Activated naive CD4-positive, alpha-beta T cell treated with anti-CD3 and anti-CD28 coated beads for 36 hours (primary cell): ENCODE measurements at regions of chr1 and their contacts with region 1.

Region 1: DNA sequence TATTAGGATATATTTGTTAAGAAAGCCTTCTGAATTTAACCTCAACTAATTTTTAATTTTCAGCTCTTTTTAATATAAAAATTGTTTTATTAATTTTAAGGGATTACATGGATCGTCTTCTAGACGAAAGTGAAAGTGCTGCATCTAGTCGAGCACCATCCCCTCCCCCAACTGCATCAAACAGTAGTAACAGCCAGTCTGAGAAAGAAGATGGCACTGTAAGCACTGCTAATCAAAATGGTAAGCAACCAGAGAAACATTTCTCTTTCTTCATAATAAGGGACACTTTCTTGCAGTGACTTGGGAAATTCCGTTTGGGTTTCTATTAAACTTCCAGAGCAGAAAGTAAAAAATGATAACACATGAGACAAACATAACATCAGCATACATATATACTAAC is 56.9 kb downstream of the MIER1 start:
- DNase-seq: peak; percentile 71
- H3K4me3 Mint-ChIP-seq: peak overlapping the region; percentile 51
- H3K27ac Mint-ChIP-seq: peak overlapping the region; percentile 87
- H3K4me1 Mint-ChIP-seq: peaks cover 50% of the 10 kb centered on the region
- H3K27me3 Mint-ChIP-seq: no peaks in the 10 kb centered on the region

Region 2: DNA sequence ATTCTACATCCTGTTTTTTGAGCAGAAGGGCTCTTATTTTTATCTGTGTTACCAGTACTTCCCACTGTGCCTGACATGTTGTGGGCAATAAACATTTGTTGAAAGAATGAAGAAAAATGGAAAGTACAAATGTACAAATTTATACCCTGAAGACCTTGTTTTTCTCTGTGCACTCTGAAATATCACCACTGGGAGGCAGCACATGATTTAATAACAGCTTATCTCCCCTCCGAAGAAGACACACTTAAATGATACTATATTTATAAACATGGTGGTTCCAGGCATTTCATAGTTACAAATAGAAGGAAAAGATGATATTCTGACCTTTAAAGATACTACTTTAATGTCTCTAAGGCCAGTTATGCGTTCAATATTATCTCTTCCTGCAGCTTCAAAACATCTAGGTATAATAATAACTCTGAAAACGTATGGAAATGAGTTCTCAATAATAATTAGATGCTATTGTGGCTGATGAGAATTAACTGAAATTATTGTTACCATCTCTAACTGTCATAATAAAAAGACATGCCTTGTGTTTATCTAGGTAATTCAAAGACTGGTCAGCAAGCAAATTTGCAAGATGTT is 216.6 kb before region 1 on chr1:
- CTCF ChIA-PET with region 1: interaction called, 5 read pairs
- intact Hi-C with region 1: loop called (anchors 2 kb)
- DNase-seq: peak; percentile 80
- H3K4me3 Mint-ChIP-seq: no peak overlapping the region
- H3K27ac Mint-ChIP-seq: no peak overlapping the region
- H3K4me1 Mint-ChIP-seq: peaks cover 22% of the 10 kb centered on the region
- H3K27me3 Mint-ChIP-seq: no peaks in the 10 kb centered on the region

Region 3: DNA sequence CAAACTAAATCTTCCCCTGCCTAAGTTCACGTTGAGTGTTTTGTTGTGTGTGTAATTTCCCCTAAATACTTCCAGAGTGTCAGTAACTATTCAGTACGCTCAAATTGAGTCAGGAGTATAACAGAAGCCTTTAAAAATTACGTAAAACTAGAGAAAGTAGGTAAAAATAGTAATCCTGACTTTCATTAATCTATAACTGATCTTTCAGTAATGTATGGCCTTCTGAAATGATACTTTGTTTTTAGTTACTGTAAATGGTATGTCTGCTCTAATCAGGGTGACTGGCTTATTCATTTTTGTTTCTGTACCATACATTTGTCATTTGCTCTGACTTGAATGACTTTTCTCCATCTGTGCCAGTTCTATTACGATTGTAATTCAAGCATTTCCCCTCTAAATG is 27.5 kb before region 1 on chr1:
- CTCF ChIA-PET with region 1: no interaction called
- intact Hi-C with region 1: loop called (anchors 1 kb)
- DNase-seq: no peak
- H3K4me3 Mint-ChIP-seq: no peak overlapping the region
- H3K27ac Mint-ChIP-seq: peak overlapping the region; percentile 78
- H3K4me1 Mint-ChIP-seq: peaks cover 43% of the 10 kb centered on the region
- H3K27me3 Mint-ChIP-seq: no peaks in the 10 kb centered on the region

Region 4: DNA sequence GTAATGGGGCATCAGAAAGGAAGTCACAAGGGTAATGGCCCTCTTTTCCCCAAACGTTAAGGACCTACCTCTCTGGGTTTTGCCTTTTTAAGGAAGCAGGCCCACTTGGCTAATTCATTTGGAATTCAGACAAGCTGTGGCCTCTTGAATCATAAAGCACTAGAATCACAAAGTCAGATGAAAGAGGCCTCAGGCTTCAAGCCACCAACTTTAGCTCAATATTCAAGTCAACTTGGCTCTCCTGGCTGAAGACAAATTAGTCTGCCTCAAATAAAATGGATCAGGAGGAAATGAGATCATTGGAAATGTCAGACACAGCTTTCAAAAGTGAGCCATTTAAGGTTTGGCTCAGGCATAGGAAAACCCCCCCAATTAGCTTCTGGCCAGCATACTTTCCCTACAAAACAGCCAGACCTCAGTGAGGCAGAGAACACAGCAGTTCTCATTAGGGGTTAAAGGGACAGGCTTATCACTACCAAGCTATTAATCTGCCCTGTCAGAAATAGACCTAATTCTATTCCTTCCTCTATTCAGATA is 38.0 kb after region 1 on chr1:
- CTCF ChIA-PET with region 1: no interaction called
- intact Hi-C with region 1: no loop called
- DNase-seq: no peak
- H3K4me3 Mint-ChIP-seq: no peak overlapping the region
- H3K27ac Mint-ChIP-seq: no peak overlapping the region
- H3K4me1 Mint-ChIP-seq: peaks cover 3% of the 10 kb centered on the region
- H3K27me3 Mint-ChIP-seq: no peaks in the 10 kb centered on the region

Region 5: GRCh38 chr1:67314696-67315095 is 333.0 kb after region 1 on chr1:
- CTCF ChIA-PET with region 1: no interaction called
- intact Hi-C with region 1: loop called (anchors 5 kb)
- DNase-seq: peak; percentile 56
- H3K4me3 Mint-ChIP-seq: peak overlapping the region; percentile 47
- H3K27ac Mint-ChIP-seq: peak overlapping the region; percentile 95
- H3K4me1 Mint-ChIP-seq: peaks cover 46% of the 10 kb centered on the region
- H3K27me3 Mint-ChIP-seq: no peaks in the 10 kb centered on the region